PC-3 (cell line): ENCODE measurements at regions of chr10 and their contacts with region 1.

Region 1: DNA sequence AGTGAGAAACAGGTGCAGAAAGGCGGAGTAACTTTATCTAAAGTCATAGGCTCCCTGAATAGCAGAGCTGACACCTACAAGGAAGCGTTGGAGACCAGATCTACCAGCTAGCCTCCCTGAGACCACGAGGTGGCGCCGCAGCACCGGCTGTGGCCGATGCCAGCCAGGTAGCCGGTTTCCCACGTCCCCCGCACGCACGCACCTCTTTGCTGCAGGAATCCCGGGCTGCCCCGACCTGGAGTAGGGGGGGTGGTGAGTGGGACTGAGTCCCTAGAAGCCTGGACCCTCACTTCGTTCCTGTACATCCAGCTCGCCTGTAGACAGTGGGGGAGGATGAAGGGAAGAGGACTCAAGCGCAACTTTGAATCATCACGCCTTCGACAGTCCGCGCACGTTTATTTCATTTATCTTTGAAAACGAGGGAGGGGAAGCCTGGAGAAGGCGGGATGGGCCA is 3.7 kb downstream of the ELOVL3 start:
- DNase-seq: peak; percentile 82
- ATAC-seq: peak; percentile 67
- H3K4me3 ChIP-seq: peak overlapping the region; percentile 66
- H3K27ac ChIP-seq: no peak overlapping the region
- H3K4me1 ChIP-seq: peaks cover 9% of the 10 kb centered on the region; the same call in 1 of the 2 replicates
- H3K27me3 ChIP-seq: peaks cover 4% of the 10 kb centered on the region; the same call in 1 of the 2 replicates
- CTCF ChIP-seq: peak; percentile 86

Region 2: DNA sequence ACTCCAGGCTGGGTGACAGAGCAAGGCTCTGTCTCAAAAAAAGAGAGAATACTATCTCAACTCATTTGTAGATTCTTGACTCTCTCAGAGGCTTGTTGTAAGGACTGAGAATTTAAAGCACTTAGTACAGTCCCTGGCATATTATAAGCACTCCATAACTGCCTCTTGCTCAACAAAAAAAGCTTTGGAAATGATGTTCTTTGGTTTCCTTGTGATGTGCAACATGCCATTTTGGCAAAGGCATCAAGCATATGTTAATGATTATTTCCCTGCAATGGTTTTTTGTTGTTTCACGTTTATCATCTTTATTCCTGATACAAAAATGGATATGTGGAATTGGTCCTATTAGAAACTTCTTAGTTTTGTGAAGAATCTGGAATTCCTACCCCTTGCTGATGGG is 62.0 kb before region 1 on chr10:
- CTCF ChIA-PET with region 1: interaction called, 7 read pairs
- POLR2A ChIA-PET with region 1: interaction called, 3 read pairs
- intact Hi-C with region 1: loop called (anchors 1 kb)
- DNase-seq: no peak
- ATAC-seq: no peak
- H3K4me3 ChIP-seq: no peak overlapping the region
- H3K27ac ChIP-seq: no peak overlapping the region
- H3K4me1 ChIP-seq: no peaks in the 10 kb centered on the region; the same call in 1 of the 2 replicates
- H3K27me3 ChIP-seq: no peaks in the 10 kb centered on the region
- CTCF ChIP-seq: no peak

Region 3: DNA sequence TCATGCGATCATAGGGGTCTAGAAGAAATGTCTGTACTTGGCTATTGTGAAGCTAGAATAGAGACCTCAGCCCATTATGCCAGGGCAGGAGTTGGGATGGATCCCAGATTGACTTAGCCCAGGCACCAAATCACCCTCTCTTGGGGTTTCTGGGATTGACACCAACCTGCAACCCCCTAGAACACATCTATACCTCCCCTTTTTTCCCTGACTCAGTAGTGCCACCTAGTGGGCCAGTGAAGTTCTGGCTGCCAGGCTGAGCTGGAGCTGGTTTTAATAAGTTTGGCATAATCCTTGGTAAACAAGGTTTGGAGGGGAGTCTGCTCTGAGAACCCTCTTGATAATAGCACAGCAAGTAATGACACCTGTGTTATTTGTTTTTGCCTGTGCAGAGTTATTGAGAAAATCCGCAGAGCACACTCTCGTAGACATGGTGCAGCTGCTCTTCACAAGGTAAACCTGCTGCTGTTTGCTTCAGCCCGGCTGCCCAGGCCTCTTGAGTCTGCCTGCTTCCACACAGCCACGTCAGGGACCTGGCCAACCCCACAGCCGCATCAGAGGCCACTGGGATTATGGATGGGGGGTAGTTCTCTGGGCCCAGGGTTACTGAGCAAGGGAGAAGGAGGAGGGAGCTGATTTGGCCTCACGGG is 122.4 kb after region 1 on chr10:
- CTCF ChIA-PET with region 1: interaction called, 14 read pairs
- POLR2A ChIA-PET with region 1: no interaction called
- intact Hi-C with region 1: loop called (anchors 1 kb)
- DNase-seq: peak; percentile 73
- ATAC-seq: no peak
- H3K4me3 ChIP-seq: no peak overlapping the region
- H3K27ac ChIP-seq: no peak overlapping the region
- H3K4me1 ChIP-seq: no peaks in the 10 kb centered on the region
- H3K27me3 ChIP-seq: no peaks in the 10 kb centered on the region
- CTCF ChIP-seq: peak; percentile 90

Region 4: DNA sequence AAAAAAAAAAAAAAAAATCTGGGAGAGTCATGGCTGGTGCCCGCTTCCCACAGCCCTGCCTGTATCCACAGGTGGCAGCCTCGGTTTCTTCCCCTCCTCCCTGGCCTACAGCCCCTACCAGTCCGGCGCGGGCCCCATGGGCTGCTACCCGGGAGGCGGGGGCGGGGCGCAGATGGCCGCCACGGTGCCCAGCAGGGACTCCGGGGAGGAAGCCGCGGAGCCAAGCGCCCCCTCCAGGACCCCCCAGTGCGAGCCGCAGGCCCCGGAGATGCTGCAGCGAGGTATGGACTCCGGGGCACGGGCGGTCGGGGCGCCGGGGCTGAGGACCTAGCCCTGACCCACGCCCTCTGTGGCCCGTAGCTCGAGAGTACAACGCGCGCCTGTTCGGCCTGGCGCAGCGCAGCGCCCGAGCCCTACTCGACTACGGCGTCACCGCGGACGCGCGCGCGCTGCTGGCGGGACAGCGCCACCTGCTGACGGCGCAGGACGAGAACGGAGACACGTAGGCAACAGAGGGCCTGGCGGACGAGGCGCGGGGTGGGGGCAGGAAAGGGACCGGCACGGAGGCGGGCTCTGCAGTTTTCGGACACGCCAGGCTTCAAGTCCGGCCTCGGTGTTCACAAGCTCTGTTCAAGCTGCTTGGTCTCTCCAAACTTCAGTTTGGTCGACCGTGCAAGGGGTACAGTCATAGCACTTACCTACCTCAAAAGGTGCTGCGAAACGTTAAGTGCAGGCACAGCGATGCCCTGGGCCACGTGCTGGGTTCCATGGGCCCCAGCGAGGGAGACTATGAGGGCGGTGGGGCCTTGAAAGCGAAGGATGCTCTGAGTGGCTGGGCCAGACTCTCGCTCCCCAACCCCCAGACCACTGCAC is 169.6 kb after region 1 on chr10:
- CTCF ChIA-PET with region 1: interaction called, 3 read pairs
- POLR2A ChIA-PET with region 1: interaction called, 3 read pairs
- intact Hi-C with region 1: loop called (anchors 1 kb)
- DNase-seq: peak; percentile 80
- ATAC-seq: peak; percentile 52
- H3K4me3 ChIP-seq: peak overlapping the region; percentile 67
- H3K27ac ChIP-seq: peak overlapping the region; percentile 30; the same call in 1 of the 2 replicates
- H3K4me1 ChIP-seq: peaks cover 35% of the 10 kb centered on the region
- H3K27me3 ChIP-seq: no peaks in the 10 kb centered on the region
- CTCF ChIP-seq: peak; percentile 84